H1 (cell line): ENCODE measurements at regions of chr4 and their contacts with region 1.

Region 1: GRCh38 chr4:1693129-1693896 is 9.2 kb upstream of the FAM53A start:
- DNase-seq: peak in 1 of 2 experiments; percentile 75
- H3K4me3 ChIP-seq: no peak overlapping the region
- H3K27ac ChIP-seq: no peak overlapping the region
- H3K4me1 ChIP-seq: no peaks in the 10 kb centered on the region
- H3K27me3 ChIP-seq: no peaks in the 10 kb centered on the region
- CTCF ChIP-seq: peak in 2 of 3 experiments; percentile 91 to 98; a peak in 3 of 4 replicates
- EP300 ChIP-seq: no peak
- POLR2A ChIP-seq: no peak
- RAD21 ChIP-seq: peak; percentile 67 to 73

Region 2: DNA sequence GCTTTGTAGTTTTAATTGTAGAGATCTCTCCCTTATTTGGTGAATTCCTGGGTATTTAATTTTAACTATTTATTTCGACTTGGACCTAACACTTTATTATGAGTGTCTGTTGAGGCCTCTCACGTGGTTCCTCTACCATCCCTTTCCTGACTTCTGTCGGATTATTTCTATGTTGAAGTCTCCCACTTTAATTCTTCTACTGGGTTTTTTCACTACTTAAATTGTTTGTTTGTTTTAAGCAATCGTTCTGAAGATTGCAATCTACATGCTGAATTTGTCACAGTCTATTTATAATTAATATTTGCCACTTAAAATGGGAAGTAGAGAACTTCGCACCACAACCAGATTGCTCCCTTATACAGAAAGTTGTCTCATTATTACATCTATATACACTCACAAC is 266.3 kb before region 1 on chr4:
- CTCF ChIA-PET with region 1: no interaction called
- POLR2A ChIA-PET with region 1: no interaction called
- DNase-seq: no peak
- H3K4me3 ChIP-seq: no peak overlapping the region
- H3K27ac ChIP-seq: no peak overlapping the region
- H3K4me1 ChIP-seq: no peaks in the 10 kb centered on the region
- H3K27me3 ChIP-seq: no peaks in the 10 kb centered on the region
- CTCF ChIP-seq: no peak
- EP300 ChIP-seq: no peak
- POLR2A ChIP-seq: no peak
- RAD21 ChIP-seq: no peak

Region 3: GRCh38 chr4:1666391-1666790 is 26.9 kb before region 1 on chr4:
- CTCF ChIA-PET with region 1: interaction called, 13 read pairs
- POLR2A ChIA-PET with region 1: no interaction called
- DNase-seq: no peak
- H3K4me3 ChIP-seq: no peak overlapping the region
- H3K27ac ChIP-seq: no peak overlapping the region
- H3K4me1 ChIP-seq: peaks cover 0 to 5% (median 4%) of the 10 kb centered on the region in 4 experiments; a peak in 4 of 7 replicates
- H3K27me3 ChIP-seq: no peaks in the 10 kb centered on the region
- CTCF ChIP-seq: no peak
- EP300 ChIP-seq: no peak
- POLR2A ChIP-seq: no peak
- RAD21 ChIP-seq: no peak

Region 4: GRCh38 chr4:1676605-1677525 is 16.4 kb before region 1 on chr4:
- CTCF ChIA-PET with region 1: interaction called, 30 read pairs
- POLR2A ChIA-PET with region 1: interaction called, 3 read pairs
- DNase-seq: no peak
- H3K4me3 ChIP-seq: no peak overlapping the region
- H3K27ac ChIP-seq: no peak overlapping the region
- H3K4me1 ChIP-seq: peaks cover 0 to 2% (median 0%) of the 10 kb centered on the region in 4 experiments; a peak in 1 of 7 replicates
- H3K27me3 ChIP-seq: no peaks in the 10 kb centered on the region
- CTCF ChIP-seq: no peak
- EP300 ChIP-seq: no peak
- POLR2A ChIP-seq: no peak
- RAD21 ChIP-seq: no peak

Region 5: GRCh38 chr4:1706358-1706757 is 13.0 kb after region 1 on chr4:
- CTCF ChIA-PET with region 1: interaction called, 94 read pairs
- POLR2A ChIA-PET with region 1: interaction called, 9 read pairs
- DNase-seq: no peak
- H3K4me3 ChIP-seq: no peak overlapping the region
- H3K27ac ChIP-seq: no peak overlapping the region
- H3K4me1 ChIP-seq: peaks cover 0 to 2% (median 0%) of the 10 kb centered on the region in 4 experiments; a peak in 2 of 7 replicates
- H3K27me3 ChIP-seq: no peaks in the 10 kb centered on the region
- CTCF ChIP-seq: no peak
- EP300 ChIP-seq: no peak
- POLR2A ChIP-seq: no peak
- RAD21 ChIP-seq: no peak

Region 6: DNA sequence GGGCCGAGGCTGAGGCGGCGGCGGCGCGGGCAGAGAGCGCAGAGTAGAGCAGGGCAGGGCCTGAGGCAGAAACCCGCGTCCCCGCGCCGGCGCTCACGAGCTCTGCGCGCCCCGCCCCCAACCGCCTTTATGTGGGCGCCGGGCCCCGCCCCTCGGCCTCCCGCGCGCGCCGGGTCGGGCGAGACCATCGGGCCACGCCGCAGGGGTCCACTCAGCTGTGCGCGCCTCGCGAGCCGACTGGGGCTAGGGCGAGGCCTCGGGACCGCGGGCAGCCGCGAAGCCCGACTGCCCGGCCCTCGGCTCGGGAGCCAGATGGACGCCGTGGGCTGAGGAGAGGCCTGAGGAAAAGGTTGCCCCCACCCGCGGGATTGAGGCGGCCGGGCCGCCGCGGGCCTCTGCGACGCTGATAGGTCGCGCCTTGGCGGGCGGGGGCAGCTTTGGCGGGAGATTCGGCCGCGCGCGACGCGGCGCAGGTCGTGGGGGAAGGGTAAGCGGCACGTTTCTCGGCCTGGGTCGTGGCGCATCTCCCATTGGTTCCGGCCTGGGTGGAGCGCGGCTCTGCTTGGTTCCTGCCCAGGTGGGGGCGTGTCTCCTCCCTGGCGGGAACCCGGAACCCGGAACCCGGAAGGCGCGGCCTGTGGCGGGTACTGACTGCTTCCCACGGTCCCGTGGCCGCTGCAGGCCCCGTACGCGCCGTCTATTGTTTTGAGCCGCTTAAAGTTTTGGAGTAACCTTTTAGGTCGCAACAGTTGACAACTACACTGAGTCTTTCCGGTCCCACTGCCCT is 19.1 kb after region 1 on chr4 and contains the start of gene SLBP:
- CTCF ChIA-PET with region 1: interaction called, 326 read pairs
- POLR2A ChIA-PET with region 1: interaction called, 9 read pairs
- DNase-seq: peak; percentile 64 to 95
- H3K4me3 ChIP-seq: peak within 1 kb of the TSS; percentile 52 to 89 (median 86)
- H3K27ac ChIP-seq: peak within 1 kb of the TSS; percentile 95; the same call in 1 of the 2 replicates
- H3K4me1 ChIP-seq: peaks cover 0 to 12% (median 3%) of the 10 kb centered on the region in 4 experiments; a peak in 4 of 7 replicates
- H3K27me3 ChIP-seq: no peaks in the 10 kb centered on the region
- CTCF ChIP-seq: no peak
- EP300 ChIP-seq: peak in 1 of 2 experiments; percentile 17; a peak in 1 of 3 replicates
- POLR2A ChIP-seq: peak in 1 of 2 experiments; percentile 82; a peak in 2 of 3 replicates
- RAD21 ChIP-seq: no peak
- total RNA-seq, gene SLBP: 45.1 and 49.0 TPM in 2 replicates

Region 7: GRCh38 chr4:1721004-1721665 is 27.8 kb after region 1 on chr4 and contains the starts of genes TACC3 and TMEM129:
- CTCF ChIA-PET with region 1: interaction called, 326 read pairs
- POLR2A ChIA-PET with region 1: interaction called, 7 read pairs
- DNase-seq: peak; percentile 93
- H3K4me3 ChIP-seq: peak within 1 kb of the TSS; percentile 84 to 99 (median 96)
- H3K27ac ChIP-seq: peak within 1 kb of the TSS; percentile 69; the same call in 1 of the 2 replicates
- H3K4me1 ChIP-seq: peaks cover 0 to 19% (median 12%) of the 10 kb centered on the region in 4 experiments; a peak in 6 of 7 replicates
- H3K27me3 ChIP-seq: no peaks in the 10 kb centered on the region
- CTCF ChIP-seq: no peak
- EP300 ChIP-seq: peak in 1 of 2 experiments; percentile 12; a peak in 1 of 3 replicates
- POLR2A ChIP-seq: peak in 1 of 2 experiments; percentile 67; a peak in 1 of 3 replicates
- RAD21 ChIP-seq: no peak
- total RNA-seq, gene TACC3: 147 and 148 TPM in 2 replicates
- total RNA-seq, gene TMEM129: 28.5 and 31.5 TPM in 2 replicates

Region 8: GRCh38 chr4:1928356-1929239 is 235.3 kb after region 1 on chr4:
- CTCF ChIA-PET with region 1: no interaction called
- POLR2A ChIA-PET with region 1: no interaction called
- DNase-seq: no peak
- H3K4me3 ChIP-seq: no peak overlapping the region
- H3K27ac ChIP-seq: no peak overlapping the region
- H3K4me1 ChIP-seq: no peaks in the 10 kb centered on the region
- H3K27me3 ChIP-seq: no peaks in the 10 kb centered on the region
- CTCF ChIP-seq: no peak
- EP300 ChIP-seq: no peak
- POLR2A ChIP-seq: no peak
- RAD21 ChIP-seq: no peak